Esophagus muscularis mucosa (tissue), 4 donors: ENCODE measurements at regions of chr10 and their contacts with region 1.

Region 1: GRCh38 chr10:112955582-112956421 is 5.8 kb downstream of the TCF7L2 start:
- DNase-seq: no peak
- H3K4me3 ChIP-seq: peak overlapping the region; percentile 28 to 46 (median 42)
- H3K27ac ChIP-seq: peak overlapping the region; percentile 90 to 93 (median 92)
- H3K4me1 ChIP-seq: peaks cover 39 to 73% (median 63%) of the 10 kb centered on the region in 4 donors
- H3K27me3 ChIP-seq: no peaks in the 10 kb centered on the region
- CTCF ChIP-seq: no peak
- EP300 ChIP-seq: no peak
- POLR2A ChIP-seq: no peak

Region 2: GRCh38 chr10:113000876-113001598 is 45.2 kb after region 1 on chr10:
- intact Hi-C with region 1: loop called (anchors 5 kb)
- DNase-seq: no peak
- H3K4me3 ChIP-seq: peak overlapping the region in 2 of 4 donors; percentile 9 to 15
- H3K27ac ChIP-seq: peak overlapping the region; percentile 65 to 78 (median 68)
- H3K4me1 ChIP-seq: peaks cover 47 to 83% (median 63%) of the 10 kb centered on the region in 4 donors
- H3K27me3 ChIP-seq: no peaks in the 10 kb centered on the region
- CTCF ChIP-seq: peak in 1 of 3 experiments; percentile 63
- EP300 ChIP-seq: no peak
- POLR2A ChIP-seq: no peak

Region 3: DNA sequence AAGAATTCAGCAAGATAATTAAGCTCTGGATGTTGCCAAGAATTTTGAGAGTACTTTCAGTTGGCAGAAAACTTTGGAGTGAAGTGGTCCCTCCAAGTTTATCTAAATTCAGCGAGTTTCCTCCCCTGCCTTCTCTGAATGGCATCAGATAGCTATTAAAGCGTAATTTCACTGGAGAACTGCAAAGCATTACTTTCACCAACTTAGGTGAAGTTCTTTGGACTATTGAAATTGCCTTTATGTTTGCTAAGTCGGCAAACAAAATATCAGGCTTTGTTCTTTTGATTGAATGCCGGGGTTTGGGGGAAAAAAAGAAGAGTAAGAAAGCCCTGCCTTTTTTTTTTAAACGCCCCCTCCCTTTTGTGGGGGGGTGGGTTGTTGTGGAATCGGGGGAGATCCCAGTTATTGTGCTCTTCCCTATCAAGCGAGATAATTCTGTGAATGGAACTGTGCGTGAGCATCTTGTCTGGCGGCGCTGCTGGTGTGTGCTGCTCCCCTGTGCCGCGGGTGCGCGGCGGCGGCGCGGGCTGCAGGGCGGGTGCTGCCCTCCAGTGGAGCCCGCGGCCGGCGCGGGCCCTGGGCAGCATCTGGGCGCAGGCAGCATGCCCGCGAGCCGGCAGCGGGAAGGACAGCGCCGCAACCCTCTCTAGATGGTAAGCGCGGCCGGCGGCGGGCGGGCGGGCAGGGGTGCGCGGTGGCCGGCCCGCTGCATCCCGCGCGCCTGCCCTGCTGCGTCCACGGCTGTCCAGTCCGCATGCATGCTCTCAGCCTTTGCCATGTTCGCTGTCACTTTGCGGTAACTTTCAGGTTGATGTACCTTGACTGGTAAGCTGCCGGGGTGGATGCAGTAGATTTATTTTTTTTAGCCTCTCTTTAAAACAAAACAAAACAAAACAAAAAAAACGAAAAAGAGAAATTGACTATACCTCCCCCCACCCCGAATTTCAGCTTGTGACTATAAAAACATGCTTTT is 170.7 kb after region 1 on chr10:
- intact Hi-C with region 1: loop called (anchors 5 kb)
- DNase-seq: no peak
- H3K4me3 ChIP-seq: peak overlapping the region; percentile 36 to 57 (median 44)
- H3K27ac ChIP-seq: peak overlapping the region in 1 of 4 donors; percentile 36
- H3K4me1 ChIP-seq: peaks cover 0 to 31% (median 16%) of the 10 kb centered on the region in 4 donors
- H3K27me3 ChIP-seq: no peaks in the 10 kb centered on the region
- CTCF ChIP-seq: peak; percentile 80 to 89 (median 84)
- EP300 ChIP-seq: no peak
- POLR2A ChIP-seq: no peak